B cell (primary cell): ENCODE measurements at regions of chr10 and their contacts with region 1.

Region 1: GRCh38 chr10:91220194-91220953 is at the start of gene PCGF5:
- DNase-seq: peak; percentile 96
- ATAC-seq: peak; percentile 94
- H3K4me3 ChIP-seq: peak within 1 kb of the TSS; percentile 60 to 89 (median 76)
- H3K4me3 Mint-ChIP-seq: peak within 1 kb of the TSS; percentile 92
- H3K27ac ChIP-seq: peak within 1 kb of the TSS; percentile 71 to 90
- H3K27ac Mint-ChIP-seq: peak within 1 kb of the TSS; percentile 97
- H3K4me1 ChIP-seq: peaks cover 34 to 36% of the 10 kb centered on the region in 2 donors
- H3K4me1 Mint-ChIP-seq: peaks cover 68% of the 10 kb centered on the region
- H3K27me3 ChIP-seq: no peaks in the 10 kb centered on the region
- H3K27me3 Mint-ChIP-seq: no peaks in the 10 kb centered on the region
- CTCF ChIP-seq: peak; percentile 14
- total RNA-seq, gene PCGF5: 102 TPM in 2 replicates

Region 2: GRCh38 chr10:91185239-91185875 is 35.0 kb before region 1 on chr10:
- CTCF ChIA-PET with region 1: interaction called, 4 read pairs
- POLR2A ChIA-PET with region 1: no interaction called
- intact Hi-C with region 1: loop called (anchors 5 kb)
- DNase-seq: no peak
- ATAC-seq: no peak
- H3K4me3 ChIP-seq: no peak overlapping the region
- H3K4me3 Mint-ChIP-seq: no peak overlapping the region
- H3K27ac ChIP-seq: no peak overlapping the region
- H3K27ac Mint-ChIP-seq: no peak overlapping the region
- H3K4me1 ChIP-seq: peaks cover 13 to 17% of the 10 kb centered on the region in 2 donors
- H3K4me1 Mint-ChIP-seq: peaks cover 79% of the 10 kb centered on the region
- H3K27me3 ChIP-seq: no peaks in the 10 kb centered on the region
- H3K27me3 Mint-ChIP-seq: no peaks in the 10 kb centered on the region
- CTCF ChIP-seq: no peak

Region 3: GRCh38 chr10:91201213-91201996 is 19.0 kb before region 1 on chr10:
- CTCF ChIA-PET with region 1: interaction called, 15 read pairs
- POLR2A ChIA-PET with region 1: interaction called, 18 read pairs
- intact Hi-C with region 1: loop called (anchors 1 kb)
- DNase-seq: peak; percentile 86
- ATAC-seq: peak; percentile 85
- H3K4me3 ChIP-seq: peak overlapping the region; percentile 1 to 60 (median 18)
- H3K4me3 Mint-ChIP-seq: peak overlapping the region; percentile 79
- H3K27ac ChIP-seq: peak overlapping the region; percentile 73 to 77
- H3K27ac Mint-ChIP-seq: peak overlapping the region; percentile 76
- H3K4me1 ChIP-seq: peaks cover 78 to 83% of the 10 kb centered on the region in 2 donors
- H3K4me1 Mint-ChIP-seq: peaks cover 86% of the 10 kb centered on the region
- H3K27me3 ChIP-seq: no peaks in the 10 kb centered on the region
- H3K27me3 Mint-ChIP-seq: no peaks in the 10 kb centered on the region
- CTCF ChIP-seq: no peak

Region 4: DNA sequence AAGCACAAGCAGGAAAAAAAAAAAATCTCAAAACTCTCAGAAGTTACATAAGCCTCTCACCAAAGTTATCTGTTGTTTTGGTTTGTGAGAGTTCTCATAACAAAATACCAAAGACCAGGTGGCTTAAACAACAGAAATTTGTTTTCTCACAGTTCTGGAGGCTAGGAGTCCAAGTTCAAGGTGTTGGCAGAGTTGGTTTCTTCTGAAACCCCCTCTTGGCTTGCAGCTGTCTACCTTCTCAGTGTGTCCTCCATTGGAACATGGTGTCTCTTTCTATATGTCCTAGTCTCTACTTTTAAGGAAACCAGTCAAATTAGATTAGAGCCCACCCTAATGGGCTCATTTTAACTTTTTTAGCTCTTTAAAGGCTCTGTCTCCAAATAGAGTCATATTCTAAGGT is 622.7 kb after region 1 on chr10:
- CTCF ChIA-PET with region 1: no interaction called
- POLR2A ChIA-PET with region 1: no interaction called
- intact Hi-C with region 1: no loop called
- DNase-seq: no peak
- ATAC-seq: no peak
- H3K4me3 ChIP-seq: no peak overlapping the region
- H3K4me3 Mint-ChIP-seq: no peak overlapping the region
- H3K27ac ChIP-seq: no peak overlapping the region
- H3K27ac Mint-ChIP-seq: no peak overlapping the region
- H3K4me1 ChIP-seq: no peaks in the 10 kb centered on the region
- H3K4me1 Mint-ChIP-seq: no peaks in the 10 kb centered on the region
- H3K27me3 ChIP-seq: no peaks in the 10 kb centered on the region
- H3K27me3 Mint-ChIP-seq: no peaks in the 10 kb centered on the region
- CTCF ChIP-seq: no peak

Region 5: DNA sequence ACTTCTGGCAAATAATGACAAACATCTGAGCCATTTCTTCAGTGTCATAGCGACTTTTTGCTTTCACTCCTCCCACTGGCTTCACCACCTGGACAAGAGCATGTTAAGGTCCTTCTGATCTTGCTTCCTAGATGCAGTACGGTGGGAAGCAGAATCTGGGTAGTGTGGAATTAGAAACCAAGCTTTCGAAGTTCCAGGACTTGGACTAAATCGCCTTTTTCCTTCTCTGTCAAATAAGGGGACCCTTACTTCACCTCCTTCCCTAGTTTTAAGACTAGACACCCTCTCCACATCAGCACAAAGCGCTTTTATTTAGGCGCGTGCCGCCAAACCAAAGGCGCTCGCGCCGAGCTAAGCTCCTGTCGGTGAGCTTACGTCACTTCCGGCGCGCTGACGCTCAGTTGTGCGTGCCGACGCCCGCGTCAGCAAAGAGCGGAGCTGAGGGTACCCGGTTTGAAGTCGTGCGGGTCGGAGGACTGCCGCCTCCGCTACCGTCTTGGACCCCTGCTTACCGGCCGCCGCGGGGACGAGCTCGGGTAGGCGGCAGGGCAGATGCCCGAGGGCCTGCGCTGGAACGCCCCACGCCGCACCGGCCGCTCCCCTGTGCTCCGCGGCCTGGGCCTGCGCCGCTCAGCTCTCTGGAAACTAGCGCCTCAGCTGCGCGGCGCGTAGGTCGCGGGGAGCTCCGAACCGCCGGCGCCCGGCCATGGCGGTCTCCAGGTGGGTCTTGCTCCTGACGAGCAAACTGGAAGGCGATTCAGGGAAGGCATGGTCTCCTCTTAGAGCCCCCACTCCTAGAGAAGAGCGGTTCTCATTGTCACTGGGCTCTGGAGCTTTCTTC is 703.2 kb after region 1 on chr10 and contains the start of gene BTAF1:
- CTCF ChIA-PET with region 1: no interaction called
- POLR2A ChIA-PET with region 1: no interaction called
- intact Hi-C with region 1: loop called (anchors 10 kb)
- DNase-seq: peak; percentile 96
- ATAC-seq: peak; percentile 93
- H3K4me3 ChIP-seq: peak within 1 kb of the TSS; percentile 88 to 98 (median 93)
- H3K4me3 Mint-ChIP-seq: peak within 1 kb of the TSS; percentile 86
- H3K27ac ChIP-seq: peak within 1 kb of the TSS; percentile 93 to 99
- H3K27ac Mint-ChIP-seq: peak within 1 kb of the TSS; percentile 100
- H3K4me1 ChIP-seq: peaks cover 18 to 20% of the 10 kb centered on the region in 2 donors
- H3K4me1 Mint-ChIP-seq: peaks cover 39% of the 10 kb centered on the region
- H3K27me3 ChIP-seq: peaks cover 0 to 4% (median 2%) of the 10 kb centered on the region in 4 experiments
- H3K27me3 Mint-ChIP-seq: peaks cover 3% of the 10 kb centered on the region
- CTCF ChIP-seq: no peak
- total RNA-seq, gene BTAF1: 78.1 and 81.7 TPM in 2 replicates